GM12878 (cell line): ENCODE measurements at regions of chr14 and their contacts with region 1.

Region 1: GRCh38 chr14:99393047-99393655 is 87.5 kb downstream of the SETD3 start:
- DNase-seq: no peak
- ATAC-seq: peak; percentile 79
- H3K4me3 ChIP-seq: no peak overlapping the region
- H3K27ac ChIP-seq: no peak overlapping the region
- H3K4me1 ChIP-seq: peaks cover 4% of the 10 kb centered on the region
- H3K27me3 ChIP-seq: no peaks in the 10 kb centered on the region
- CTCF ChIP-seq: peak; percentile 70 to 89 (median 85)
- EP300 ChIP-seq: no peak
- POLR2A ChIP-seq: no peak
- RAD21 ChIP-seq: peak; percentile 32; the same call in 1 of the 2 replicates

Region 2: DNA sequence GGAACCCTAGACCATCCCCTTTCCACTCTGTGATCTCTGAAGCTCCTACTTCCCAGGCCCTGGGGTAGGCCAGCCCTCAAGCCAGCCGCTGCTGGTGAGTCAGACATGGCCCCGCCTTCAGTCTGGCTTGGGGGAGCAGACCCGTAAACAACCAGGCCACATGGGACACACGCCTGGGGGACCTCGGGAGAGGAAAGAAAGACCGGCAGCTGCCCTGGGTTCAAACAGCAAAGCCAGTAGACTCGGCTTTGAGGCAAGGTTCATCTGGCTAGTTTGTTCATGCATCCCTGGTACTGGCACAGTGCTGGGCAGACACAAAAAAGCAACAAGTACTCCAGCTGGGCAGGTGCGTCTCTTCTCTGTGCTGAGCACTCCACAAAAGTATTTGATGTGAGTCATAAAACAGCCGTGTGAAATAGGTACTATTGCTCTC is 14.4 kb before region 1 on chr14:
- CTCF ChIA-PET with region 1: interaction called, 15 read pairs
- POLR2A ChIA-PET with region 1: no interaction called
- RAD21 ChIA-PET with region 1: no interaction called
- SMC1A ChIA-PET with region 1: interaction called, 3 read pairs
- in situ Hi-C with region 1: no loop called
- intact Hi-C with region 1: no loop called
- DNase-seq: no peak
- ATAC-seq: peak; percentile 34; the same call in 2 of the 3 replicates
- H3K4me3 ChIP-seq: no peak overlapping the region
- H3K27ac ChIP-seq: no peak overlapping the region
- H3K4me1 ChIP-seq: no peaks in the 10 kb centered on the region
- H3K27me3 ChIP-seq: no peaks in the 10 kb centered on the region; a peak in 1 of 4 replicates
- CTCF ChIP-seq: no peak
- EP300 ChIP-seq: no peak
- POLR2A ChIP-seq: no peak
- RAD21 ChIP-seq: no peak

Region 3: GRCh38 chr14:99408286-99408970 is 15.3 kb after region 1 on chr14:
- CTCF ChIA-PET with region 1: interaction called, 233 read pairs
- POLR2A ChIA-PET with region 1: no interaction called
- RAD21 ChIA-PET with region 1: interaction called, 3 read pairs
- SMC1A ChIA-PET with region 1: interaction called, 22 read pairs
- in situ Hi-C with region 1: no loop called
- intact Hi-C with region 1: no loop called
- DNase-seq: no peak
- ATAC-seq: no peak
- H3K4me3 ChIP-seq: no peak overlapping the region
- H3K27ac ChIP-seq: no peak overlapping the region
- H3K4me1 ChIP-seq: peaks cover 5% of the 10 kb centered on the region; the same call in 1 of the 2 replicates
- H3K27me3 ChIP-seq: no peaks in the 10 kb centered on the region
- CTCF ChIP-seq: no peak
- EP300 ChIP-seq: no peak
- POLR2A ChIP-seq: no peak
- RAD21 ChIP-seq: no peak

Region 4: GRCh38 chr14:99415496-99416281 is 22.5 kb after region 1 on chr14:
- CTCF ChIA-PET with region 1: interaction called, 233 read pairs
- POLR2A ChIA-PET with region 1: no interaction called
- RAD21 ChIA-PET with region 1: interaction called, 20 read pairs
- SMC1A ChIA-PET with region 1: interaction called, 22 read pairs
- in situ Hi-C with region 1: no loop called
- intact Hi-C with region 1: loop called (anchors 1 kb)
- DNase-seq: peak; percentile 55
- ATAC-seq: peak; percentile 97
- H3K4me3 ChIP-seq: no peak overlapping the region
- H3K27ac ChIP-seq: no peak overlapping the region
- H3K4me1 ChIP-seq: peaks cover 5% of the 10 kb centered on the region; the same call in 1 of the 2 replicates
- H3K27me3 ChIP-seq: no peaks in the 10 kb centered on the region
- CTCF ChIP-seq: peak; percentile 75 to 86 (median 79)
- EP300 ChIP-seq: no peak
- POLR2A ChIP-seq: no peak
- RAD21 ChIP-seq: peak; percentile 91